Ovary (tissue), 10 donors: ENCODE measurements at regions of chr12 and their contacts with region 1.

Region 1: GRCh38 chr12:8681041-8681902 is 16.5 kb upstream of the RIMKLB start:
- DNase-seq: no peak
- H3K4me3 ChIP-seq: no peak overlapping the region
- H3K27ac ChIP-seq: no peak overlapping the region
- H3K4me1 ChIP-seq: no peaks in the 10 kb centered on the region
- H3K27me3 ChIP-seq: no peaks in the 10 kb centered on the region
- CTCF ChIP-seq: no peak
- EP300 ChIP-seq: no peak
- POLR2A ChIP-seq: no peak

Region 2: GRCh38 chr12:8823565-8824300 is 142.5 kb after region 1 on chr12:
- intact Hi-C with region 1: loop called (anchors 2 to 10 kb)
- DNase-seq: peak in 4 of 5 donors; percentile 39 to 56 (median 45)
- H3K4me3 ChIP-seq: no peak overlapping the region
- H3K27ac ChIP-seq: no peak overlapping the region
- H3K4me1 ChIP-seq: no peaks in the 10 kb centered on the region
- H3K27me3 ChIP-seq: no peaks in the 10 kb centered on the region
- CTCF ChIP-seq: peak in 2 of 3 donors; percentile 45 to 76
- EP300 ChIP-seq: no peak
- POLR2A ChIP-seq: no peak

Region 3: DNA sequence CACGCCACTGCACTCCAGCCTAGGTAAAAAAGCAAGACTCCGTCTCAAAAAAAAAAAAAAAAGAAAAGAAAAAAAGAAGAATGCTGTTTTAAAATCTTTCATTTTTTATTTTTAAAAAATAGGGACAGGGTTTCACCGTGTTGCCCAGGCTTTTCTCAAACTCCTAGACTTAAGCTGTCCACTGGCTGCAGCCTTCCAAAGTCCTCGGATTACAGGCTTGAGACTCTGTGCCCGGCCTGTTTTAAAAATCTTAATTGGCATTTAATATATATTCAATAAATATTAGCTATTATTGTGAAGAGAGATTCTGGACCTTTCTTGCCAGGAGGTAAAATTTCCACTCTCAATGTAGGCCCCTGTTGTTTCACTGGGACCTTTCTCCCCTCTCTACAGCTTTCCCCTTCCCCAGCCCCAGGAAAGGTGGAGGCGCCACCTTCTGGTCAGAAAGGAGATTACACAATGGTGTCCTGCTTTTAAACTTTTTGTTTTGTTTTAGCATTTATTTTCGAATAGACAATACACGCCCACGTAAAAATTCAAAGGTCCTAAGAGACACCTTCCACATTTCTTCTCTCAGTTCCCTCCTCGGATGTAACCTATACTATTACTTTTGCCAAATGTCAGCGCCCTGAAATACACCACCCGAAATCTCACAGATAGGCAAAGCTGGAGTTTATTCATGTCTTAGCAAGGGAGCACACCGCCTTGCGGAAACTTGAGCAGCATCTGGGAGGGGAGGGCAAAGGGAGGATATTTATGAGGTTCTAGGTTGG is 209.2 kb after region 1 on chr12:
- intact Hi-C with region 1: loop called in 2 of 4 experiments (anchors 5 kb)
- DNase-seq: peak; percentile 43 to 64 (median 47)
- H3K4me3 ChIP-seq: peak overlapping the region; percentile 44
- H3K27ac ChIP-seq: no peak overlapping the region
- H3K4me1 ChIP-seq: no peaks in the 10 kb centered on the region
- H3K27me3 ChIP-seq: no peaks in the 10 kb centered on the region
- CTCF ChIP-seq: peak; percentile 76 to 89 (median 82)
- EP300 ChIP-seq: no peak
- POLR2A ChIP-seq: no peak

Region 4: GRCh38 chr12:9039397-9039977 is 358.2 kb after region 1 on chr12:
- intact Hi-C with region 1: loop called in 2 of 4 experiments (anchors 5 to 10 kb)
- DNase-seq: peak in 1 of 5 donors; percentile 25
- H3K4me3 ChIP-seq: no peak overlapping the region
- H3K27ac ChIP-seq: no peak overlapping the region
- H3K4me1 ChIP-seq: no peaks in the 10 kb centered on the region
- H3K27me3 ChIP-seq: no peaks in the 10 kb centered on the region
- CTCF ChIP-seq: peak; percentile 32 to 70 (median 58)
- EP300 ChIP-seq: no peak
- POLR2A ChIP-seq: no peak

Region 5: DNA sequence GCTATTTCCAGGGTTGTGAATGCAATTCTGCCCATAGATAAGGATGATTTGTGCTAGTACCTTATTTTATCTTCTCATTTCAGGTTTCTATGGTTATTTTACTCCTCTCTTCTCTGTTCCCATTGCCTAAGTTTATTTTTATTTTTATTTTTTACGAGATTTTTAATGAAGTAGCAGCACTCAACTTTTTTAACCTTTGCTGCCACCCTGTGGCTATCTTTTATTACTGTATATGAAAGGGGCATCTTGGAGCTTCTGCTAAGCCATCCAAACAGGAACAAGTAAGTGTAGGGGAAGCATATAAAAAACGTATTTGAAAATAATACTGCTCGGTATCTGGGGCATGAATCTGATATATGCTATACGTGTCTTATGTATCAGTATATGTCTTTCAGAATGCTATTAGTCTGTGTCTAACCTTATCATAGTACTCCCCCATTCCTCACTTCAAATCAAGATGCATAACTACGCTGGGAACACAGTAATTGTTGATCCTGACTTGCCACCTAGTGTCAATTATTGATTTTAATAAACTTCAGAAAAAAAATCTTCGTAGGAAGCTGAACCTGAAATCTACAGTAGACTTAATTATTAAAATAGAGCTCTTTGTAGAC is 368.4 kb after region 1 on chr12:
- intact Hi-C with region 1: loop called in 2 of 4 experiments (anchors 5 to 10 kb)
- DNase-seq: no peak
- H3K4me3 ChIP-seq: no peak overlapping the region
- H3K27ac ChIP-seq: no peak overlapping the region
- H3K4me1 ChIP-seq: no peaks in the 10 kb centered on the region
- H3K27me3 ChIP-seq: no peaks in the 10 kb centered on the region
- CTCF ChIP-seq: peak in 2 of 3 donors; percentile 9 to 30
- EP300 ChIP-seq: no peak
- POLR2A ChIP-seq: no peak